Naive thymus-derived CD8-positive, alpha-beta T cell (primary cell): ENCODE measurements at regions of chr1 and their contacts with region 1.

Region 1: GRCh38 chr1:228165372-228166169 is at the start of gene IBA57:
- DNase-seq: peak; percentile 99 to 100 (median 100)
- ATAC-seq: peak; percentile 77 to 79
- H3K4me3 Mint-ChIP-seq: peak within 1 kb of the TSS; percentile 81 to 93 (median 90)
- H3K27ac Mint-ChIP-seq: peak within 1 kb of the TSS; percentile 89 to 99 (median 97)
- H3K4me1 Mint-ChIP-seq: peaks cover 26 to 67% (median 57%) of the 10 kb centered on the region in 4 donors
- H3K27me3 Mint-ChIP-seq: no peaks in the 10 kb centered on the region
- polyA plus RNA-seq, gene IBA57: 3.3 to 4.2 (median 3.4) TPM

Region 2: DNA sequence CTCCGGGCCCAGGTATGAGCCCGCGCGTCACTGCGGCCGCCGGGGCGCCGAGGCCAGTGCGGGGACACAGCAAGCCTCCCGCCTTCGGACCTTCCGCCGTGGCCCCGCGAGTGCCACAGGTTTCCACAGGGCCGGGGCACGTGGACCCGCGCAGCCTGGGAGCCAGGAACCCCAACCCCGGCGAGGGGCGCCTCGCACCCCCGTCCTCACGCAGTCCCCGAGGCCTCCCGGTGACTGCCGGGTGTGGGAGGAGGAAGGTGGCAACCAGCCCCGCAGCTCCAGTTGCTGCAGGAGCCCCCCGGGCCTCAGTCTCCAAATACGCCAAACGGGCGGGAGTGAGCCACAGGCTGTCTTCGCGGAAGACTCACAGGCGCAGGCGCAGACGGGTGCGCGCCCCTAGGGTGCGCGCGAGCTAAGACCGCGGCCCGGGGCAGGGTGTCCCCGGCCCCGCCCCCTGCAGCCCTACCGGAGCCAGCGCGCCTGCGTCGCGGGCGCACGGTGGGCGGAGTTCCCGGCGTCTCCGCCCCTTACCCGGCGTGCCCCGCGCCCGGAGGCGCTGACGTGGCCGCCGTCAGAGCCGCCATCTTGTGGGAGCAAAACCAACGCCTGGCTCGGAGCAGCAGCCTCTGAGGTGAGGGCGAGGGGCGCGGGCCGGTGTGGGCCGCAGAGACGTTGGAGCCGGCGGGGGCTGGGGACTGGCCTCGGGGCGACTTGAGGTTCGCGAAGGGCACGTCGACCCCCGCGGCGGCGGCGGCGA is 83.3 kb before region 1 on chr1 and contains the start of gene ARF1:
- POLR2A ChIA-PET with region 1: interaction called, 13 read pairs
- DNase-seq: peak; percentile 87 to 98 (median 94)
- ATAC-seq: peak; percentile 84 to 89
- H3K4me3 Mint-ChIP-seq: peak within 1 kb of the TSS; percentile 88 to 96 (median 94)
- H3K27ac Mint-ChIP-seq: peak within 1 kb of the TSS; percentile 81 to 99 (median 98)
- H3K4me1 Mint-ChIP-seq: peaks cover 31 to 64% (median 57%) of the 10 kb centered on the region in 4 donors
- H3K27me3 Mint-ChIP-seq: no peaks in the 10 kb centered on the region
- polyA plus RNA-seq, gene ARF1: 332 to 385 (median 368) TPM

Region 3: GRCh38 chr1:228131766-228132165 is 33.8 kb before region 1 on chr1:
- POLR2A ChIA-PET with region 1: interaction called, 128 read pairs
- DNase-seq: no peak
- ATAC-seq: no peak
- H3K4me3 Mint-ChIP-seq: no peak overlapping the region
- H3K27ac Mint-ChIP-seq: no peak overlapping the region
- H3K4me1 Mint-ChIP-seq: peaks cover 0 to 16% (median 2%) of the 10 kb centered on the region in 4 donors
- H3K27me3 Mint-ChIP-seq: peaks cover 5 to 24% (median 10%) of the 10 kb centered on the region in 5 donors

Region 4: GRCh38 chr1:228154670-228155571 is 10.7 kb before region 1 on chr1:
- POLR2A ChIA-PET with region 1: interaction called, 49 read pairs
- DNase-seq: peak in 5 of 10 donors; percentile 31 to 50 (median 41)
- ATAC-seq: peak; percentile 43 to 70
- H3K4me3 Mint-ChIP-seq: peak overlapping the region in 9 of 10 donors; percentile 11 to 75 (median 55)
- H3K27ac Mint-ChIP-seq: peak overlapping the region; percentile 40 to 94 (median 86)
- H3K4me1 Mint-ChIP-seq: peaks cover 15 to 44% (median 31%) of the 10 kb centered on the region in 4 donors
- H3K27me3 Mint-ChIP-seq: no peaks in the 10 kb centered on the region

Region 5: DNA sequence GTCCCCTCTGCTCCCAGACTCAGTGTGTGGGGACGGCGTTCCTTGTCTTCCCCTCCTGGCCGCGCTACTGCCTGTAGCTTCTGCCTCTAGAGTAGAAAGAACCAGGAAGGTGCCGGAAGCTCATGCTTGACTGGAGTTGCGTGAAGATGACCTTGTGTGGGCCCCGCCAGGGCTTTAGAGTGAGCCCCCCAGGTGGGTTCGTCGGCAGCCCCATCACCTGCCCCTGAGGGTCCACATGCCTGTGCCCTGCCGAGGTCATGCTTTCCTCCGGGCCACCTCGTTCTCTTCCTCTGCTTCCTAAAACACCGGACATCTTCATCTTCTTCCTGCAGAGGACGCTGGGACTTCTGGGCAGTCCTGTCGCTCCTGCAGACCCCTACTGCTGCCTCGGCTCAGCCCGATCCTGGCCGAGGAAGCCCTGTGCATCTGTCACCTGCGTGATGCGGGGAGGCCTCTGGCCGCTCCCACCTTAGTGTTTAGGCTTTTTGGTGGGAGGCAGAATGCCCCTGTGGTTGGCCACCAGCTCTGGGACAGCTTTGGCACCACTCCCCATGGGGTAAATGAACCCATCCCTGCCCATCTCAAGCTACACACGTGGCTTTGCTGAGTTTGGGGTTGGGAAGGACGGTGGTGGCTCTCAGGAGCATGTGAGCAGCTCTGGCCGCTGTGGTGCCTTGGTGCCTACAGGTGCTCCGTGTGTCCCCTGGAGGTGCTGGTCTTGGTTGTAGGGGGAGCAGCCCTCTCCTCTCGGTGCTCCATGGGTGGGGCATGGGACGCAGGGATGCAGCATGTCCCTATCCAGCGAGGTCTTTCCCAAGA is 54.6 kb after region 1 on chr1:
- POLR2A ChIA-PET with region 1: no interaction called
- DNase-seq: no peak
- ATAC-seq: no peak
- H3K4me3 Mint-ChIP-seq: no peak overlapping the region
- H3K27ac Mint-ChIP-seq: peak overlapping the region in 1 of 10 donors; percentile 71
- H3K4me1 Mint-ChIP-seq: peaks cover 0 to 10% (median 5%) of the 10 kb centered on the region in 4 donors
- H3K27me3 Mint-ChIP-seq: no peaks in the 10 kb centered on the region

Region 6: DNA sequence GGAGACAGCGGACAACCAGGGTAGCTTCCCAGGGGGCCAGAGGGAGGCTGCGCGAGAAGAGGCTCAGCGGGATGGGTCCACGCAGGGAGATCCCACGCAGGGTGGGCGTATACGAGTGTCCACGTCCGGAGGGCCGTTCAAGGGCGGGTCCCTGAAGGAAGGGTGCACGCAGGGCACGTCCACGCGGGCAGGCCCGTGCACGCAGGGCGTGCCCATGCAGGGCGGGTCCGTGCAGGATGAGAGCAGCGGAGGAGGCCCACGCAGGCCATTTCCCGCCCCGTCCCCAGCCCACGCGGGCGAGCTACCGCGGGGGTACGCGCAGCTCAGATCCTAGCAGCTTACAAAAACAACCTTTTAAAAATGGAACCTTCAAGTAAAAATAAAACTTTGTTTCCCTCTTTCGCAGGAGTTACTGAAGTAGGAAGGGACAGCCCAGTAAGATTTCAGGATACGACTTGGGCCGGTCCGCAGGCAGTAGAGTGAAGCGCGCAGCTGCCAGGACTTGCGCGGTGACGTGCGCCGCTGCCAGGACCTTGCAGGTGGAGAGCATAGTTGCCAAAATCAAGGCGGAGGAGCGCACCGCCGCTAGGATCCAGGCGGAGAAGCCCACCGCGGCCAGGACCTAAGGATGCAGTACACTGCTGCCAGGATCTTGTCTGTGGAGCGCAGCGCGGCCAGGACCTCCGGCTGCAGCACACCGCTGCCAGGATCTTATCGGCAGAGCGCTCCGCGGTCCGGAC is 321.2 kb after region 1 on chr1:
- POLR2A ChIA-PET with region 1: interaction called, 14 read pairs
- DNase-seq: peak; percentile 68 to 96 (median 80)
- ATAC-seq: peak; percentile 76 to 81
- H3K4me3 Mint-ChIP-seq: peak overlapping the region; percentile 91 to 99 (median 96)
- H3K27ac Mint-ChIP-seq: peak overlapping the region; percentile 99 to 100 (median 100)
- H3K4me1 Mint-ChIP-seq: peaks cover 20 to 41% (median 33%) of the 10 kb centered on the region in 4 donors
- H3K27me3 Mint-ChIP-seq: no peaks in the 10 kb centered on the region